ENCODE measurements at regions of chrX and their contacts with region 1.

Region 1: GRCh38 chrX:54386314-54386713 is 28.5 kb upstream of the WNK3 start:
- DNase-seq: no peak

Region 2: GRCh38 chrX:54281676-54282075 is 104.6 kb before region 1 on chrX:
- intact Hi-C with region 1: no loop called
- DNase-seq: no peak

Region 3: DNA sequence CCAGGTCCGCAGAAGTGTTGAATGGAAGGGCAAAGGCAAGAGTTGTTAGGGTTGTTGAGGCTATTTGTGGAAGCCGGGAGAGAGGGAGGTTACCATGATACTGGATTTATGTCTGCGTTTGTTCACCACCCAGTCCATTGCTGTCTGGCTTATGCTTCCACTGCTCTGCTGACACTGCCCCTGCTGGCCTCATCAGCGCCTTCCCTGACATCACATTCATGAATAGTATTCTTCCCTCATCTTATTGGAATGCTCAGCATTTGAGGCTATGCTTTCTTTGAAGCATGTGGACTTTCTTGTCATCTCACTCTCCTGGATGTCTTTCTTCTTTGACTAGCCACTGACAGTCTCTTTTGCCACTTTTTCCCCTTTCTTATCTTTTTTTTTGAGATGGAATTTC is 154.0 kb after region 1 on chrX:
- intact Hi-C with region 1: loop called in 1 of 2 experiments (anchors 5 kb)
- DNase-seq: peak; percentile 42

Region 4: DNA sequence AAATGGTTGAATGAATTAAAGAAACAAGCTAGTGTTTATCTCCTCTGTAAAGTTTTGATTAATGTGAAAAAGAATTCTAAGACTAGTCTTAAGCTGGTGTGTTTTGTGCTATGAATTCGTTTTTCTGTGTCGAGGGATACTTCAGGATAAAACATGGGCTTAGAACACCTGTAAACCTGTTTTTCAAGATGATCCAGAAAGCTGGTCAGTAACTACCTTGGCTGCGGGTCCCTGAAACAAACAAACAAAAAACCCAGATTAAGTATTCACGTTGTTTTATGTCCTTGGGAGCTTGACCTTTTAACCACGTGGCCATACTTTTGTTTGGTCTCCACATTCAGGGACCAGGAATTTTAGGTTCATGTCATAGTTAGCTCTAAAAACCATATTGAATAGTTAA is 881.8 kb after region 1 on chrX:
- intact Hi-C with region 1: loop called in 1 of 2 experiments (anchors 5 kb)
- DNase-seq: no peak

Measured in posterior vena cava (tissue), 2 donors.